ENCODE measurements at regions of chr7 and their contacts with region 1.

Region 1: GRCh38 chr7:27160546-27161213 is 4.2 kb upstream of the HOXA7 start:
- DNase-seq: peak; percentile 85
- ATAC-seq: peak; percentile 74
- H3K4me3 Mint-ChIP-seq: peak overlapping the region; percentile 57
- H3K27ac Mint-ChIP-seq: no peak overlapping the region
- H3K4me1 Mint-ChIP-seq: peaks cover 8% of the 10 kb centered on the region
- H3K27me3 Mint-ChIP-seq: peaks cover 85% of the 10 kb centered on the region

Region 2: DNA sequence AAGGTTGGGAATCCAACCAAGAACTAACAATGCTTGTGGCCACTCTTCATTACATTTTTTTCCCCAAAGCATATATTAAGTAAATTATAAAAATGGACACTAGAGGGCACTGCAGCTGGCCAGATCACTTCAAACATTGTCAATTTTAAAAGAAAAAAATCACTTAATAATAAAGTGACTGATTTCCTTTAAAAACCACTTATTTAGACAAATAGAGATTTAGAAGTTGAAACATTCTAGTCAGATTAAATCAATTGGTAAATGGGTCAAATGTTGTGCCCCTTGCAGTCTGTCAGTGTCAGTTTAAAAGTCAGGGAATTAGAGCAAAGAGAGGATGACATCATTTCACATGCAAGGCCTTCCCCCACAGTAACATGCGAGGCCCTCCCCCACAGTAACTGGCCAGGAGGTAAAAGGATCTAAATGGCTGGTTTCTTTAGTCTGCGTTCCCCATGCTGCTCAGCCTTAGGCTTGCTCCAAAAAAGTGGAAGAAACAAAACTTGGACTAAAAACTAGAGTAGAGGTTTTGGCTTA is 474.2 kb before region 1 on chr7:
- CTCF ChIA-PET with region 1: interaction called, 38 read pairs
- DNase-seq: no peak
- ATAC-seq: no peak
- H3K4me3 Mint-ChIP-seq: no peak overlapping the region
- H3K27ac Mint-ChIP-seq: no peak overlapping the region
- H3K4me1 Mint-ChIP-seq: peaks cover 30% of the 10 kb centered on the region
- H3K27me3 Mint-ChIP-seq: peaks cover under 1% of the 10 kb centered on the region

Region 3: DNA sequence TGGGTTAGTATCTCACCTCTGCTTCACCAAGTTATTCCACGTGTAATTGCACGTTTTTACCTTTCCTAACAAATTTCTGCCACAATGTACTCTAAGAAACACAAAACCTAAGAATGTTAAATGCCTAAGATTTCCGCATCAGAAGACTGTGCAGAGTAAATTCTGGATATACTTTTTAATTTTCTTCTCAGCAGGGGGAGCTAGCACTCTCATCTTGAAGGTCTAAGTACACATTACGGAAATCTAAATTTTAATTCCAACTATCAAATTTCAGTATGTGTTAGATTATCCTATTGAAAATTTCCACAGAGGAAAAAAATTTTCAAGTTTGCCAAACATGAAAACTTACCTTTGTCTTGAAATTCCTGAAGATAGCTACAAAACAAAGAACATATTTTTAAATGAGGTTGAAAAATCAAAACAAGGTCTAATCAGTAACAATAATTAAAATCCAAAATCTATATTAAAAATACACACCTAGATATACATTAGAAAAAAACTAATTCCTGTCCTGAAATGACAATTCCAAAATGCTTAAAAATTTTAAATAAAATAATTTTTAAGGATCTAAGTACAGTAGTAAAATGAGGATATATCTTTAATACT is 306.8 kb before region 1 on chr7:
- CTCF ChIA-PET with region 1: interaction called, 11 read pairs
- DNase-seq: no peak
- ATAC-seq: no peak
- H3K4me3 Mint-ChIP-seq: no peak overlapping the region
- H3K27ac Mint-ChIP-seq: no peak overlapping the region
- H3K4me1 Mint-ChIP-seq: peaks cover 9% of the 10 kb centered on the region
- H3K27me3 Mint-ChIP-seq: peaks cover 29% of the 10 kb centered on the region

Region 4: GRCh38 chr7:27179503-27180430 is 19.1 kb after region 1 on chr7:
- CTCF ChIA-PET with region 1: interaction called, 13 read pairs
- DNase-seq: peak; percentile 58
- ATAC-seq: peak; percentile 68
- H3K4me3 Mint-ChIP-seq: no peak overlapping the region
- H3K27ac Mint-ChIP-seq: no peak overlapping the region
- H3K4me1 Mint-ChIP-seq: peaks cover 6% of the 10 kb centered on the region
- H3K27me3 Mint-ChIP-seq: peaks cover 82% of the 10 kb centered on the region